Heart right ventricle (tissue), 16 donors: ENCODE measurements at regions of chr2 and their contacts with region 1.

Region 1: GRCh38 chr2:57497489-57498096 is 549.0 kb upstream of the VRK2 start:
- DNase-seq: peak in 1 of 2 donors; percentile 10
- ATAC-seq: peak in 2 of 8 donors; percentile 29 to 61
- H3K4me3 ChIP-seq: no peak overlapping the region
- H3K27ac ChIP-seq: no peak overlapping the region
- H3K4me1 ChIP-seq: peaks cover 0 to 7% (median 0%) of the 10 kb centered on the region in 9 donors
- H3K27me3 ChIP-seq: no peaks in the 10 kb centered on the region
- CTCF ChIP-seq: peak; percentile 57 to 78 (median 73)

Region 2: DNA sequence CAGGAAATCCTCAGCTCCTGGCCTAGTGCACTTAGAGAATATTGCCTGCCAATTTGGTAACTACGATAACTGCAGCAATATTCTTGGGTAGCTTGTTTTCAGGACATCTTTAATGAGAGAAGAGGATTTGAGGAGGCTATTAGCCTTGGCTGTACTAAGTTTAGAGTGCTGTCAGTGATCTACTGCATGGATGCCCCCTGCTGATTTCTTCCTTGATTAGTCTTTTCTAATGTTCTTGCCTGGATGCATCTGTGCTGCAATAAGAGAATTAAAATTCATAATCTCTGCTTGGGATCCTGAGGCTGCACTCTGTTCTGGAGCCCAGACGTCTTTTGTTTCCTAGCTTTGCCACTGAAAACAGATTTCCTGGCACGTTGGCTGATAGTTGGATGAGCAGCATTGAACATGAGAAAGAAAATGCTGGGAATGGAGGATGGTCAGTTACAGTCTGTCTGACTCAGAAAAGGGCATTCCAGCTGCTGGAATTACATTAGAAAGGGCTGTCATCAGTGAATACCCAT is 1198.4 kb before region 1 on chr2:
- intact Hi-C with region 1: loop called in 1 of 10 experiments (anchors 10 kb)
- DNase-seq: no peak
- ATAC-seq: no peak
- H3K4me3 ChIP-seq: no peak overlapping the region
- H3K27ac ChIP-seq: no peak overlapping the region
- H3K4me1 ChIP-seq: peaks cover 0 to 16% (median 8%) of the 10 kb centered on the region in 9 donors
- H3K27me3 ChIP-seq: no peaks in the 10 kb centered on the region
- CTCF ChIP-seq: no peak

Region 3: GRCh38 chr2:56985609-56986008 is 512.0 kb before region 1 on chr2:
- intact Hi-C with region 1: loop called in 1 of 10 experiments (anchors 5 kb)
- DNase-seq: no peak
- ATAC-seq: no peak
- H3K4me3 ChIP-seq: no peak overlapping the region
- H3K27ac ChIP-seq: no peak overlapping the region
- H3K4me1 ChIP-seq: no peaks in the 10 kb centered on the region
- H3K27me3 ChIP-seq: no peaks in the 10 kb centered on the region
- CTCF ChIP-seq: peak in 1 of 9 donors; percentile 20

Region 4: GRCh38 chr2:57376985-57377384 is 120.6 kb before region 1 on chr2:
- intact Hi-C with region 1: loop called in 1 of 10 experiments (anchors 10 kb)
- DNase-seq: no peak
- ATAC-seq: no peak
- H3K4me3 ChIP-seq: no peak overlapping the region
- H3K27ac ChIP-seq: no peak overlapping the region
- H3K4me1 ChIP-seq: no peaks in the 10 kb centered on the region
- H3K27me3 ChIP-seq: no peaks in the 10 kb centered on the region
- CTCF ChIP-seq: peak in 3 of 9 donors; percentile 12 to 25 (median 21)